Panc1 (cell line): ENCODE measurements at regions of chr7 and their contacts with region 1.

Region 1: DNA sequence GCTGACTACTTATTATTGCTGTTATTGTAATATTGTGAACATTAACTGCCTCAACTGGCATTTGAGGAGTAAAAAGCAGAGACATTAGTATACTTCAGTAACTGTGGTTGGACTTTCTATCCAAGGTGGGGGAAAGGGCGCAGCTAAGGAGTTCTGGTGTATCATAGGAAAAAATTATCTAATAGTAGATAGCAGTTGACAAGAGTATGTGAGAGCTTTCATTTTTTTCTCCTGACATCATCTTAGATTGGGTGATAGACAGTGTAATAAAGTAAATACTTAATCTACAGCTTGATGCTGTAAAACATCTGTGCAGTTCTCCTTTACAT is 68.9 kb downstream of the PHTF2 start:
- DNase-seq: no peak
- ATAC-seq: no peak; the same call in 1 of the 2 replicates
- H3K4me3 ChIP-seq: no peak overlapping the region
- H3K27ac ChIP-seq: no peak overlapping the region
- H3K4me1 ChIP-seq: peaks cover 14% of the 10 kb centered on the region; the same call in 1 of the 2 replicates
- H3K27me3 ChIP-seq: no peaks in the 10 kb centered on the region
- CTCF ChIP-seq: no peak

Region 2: GRCh38 chr7:77903597-77903996 is 36.1 kb after region 1 on chr7:
- CTCF ChIA-PET with region 1: no interaction called
- POLR2A ChIA-PET with region 1: interaction called, 18 read pairs
- in situ Hi-C with region 1: no loop called
- intact Hi-C with region 1: no loop called
- DNase-seq: no peak
- ATAC-seq: 0 out of 2 replicates have a peak, but pooled peaks have one; percentile 63
- H3K4me3 ChIP-seq: no peak overlapping the region
- H3K27ac ChIP-seq: no peak overlapping the region
- H3K4me1 ChIP-seq: no peaks in the 10 kb centered on the region
- H3K27me3 ChIP-seq: no peaks in the 10 kb centered on the region
- CTCF ChIP-seq: peak; percentile 48

Region 3: GRCh38 chr7:77913977-77914607 is 46.6 kb after region 1 on chr7:
- CTCF ChIA-PET with region 1: no interaction called
- POLR2A ChIA-PET with region 1: no interaction called
- in situ Hi-C with region 1: no loop called
- intact Hi-C with region 1: no loop called
- DNase-seq: no peak
- ATAC-seq: no peak
- H3K4me3 ChIP-seq: no peak overlapping the region
- H3K27ac ChIP-seq: no peak overlapping the region
- H3K4me1 ChIP-seq: no peaks in the 10 kb centered on the region
- H3K27me3 ChIP-seq: no peaks in the 10 kb centered on the region
- CTCF ChIP-seq: no peak

Region 4: GRCh38 chr7:77989981-77990566 is 122.6 kb after region 1 on chr7:
- CTCF ChIA-PET with region 1: no interaction called
- POLR2A ChIA-PET with region 1: no interaction called
- in situ Hi-C with region 1: no loop called
- intact Hi-C with region 1: no loop called
- DNase-seq: no peak
- ATAC-seq: no peak
- H3K4me3 ChIP-seq: no peak overlapping the region
- H3K27ac ChIP-seq: no peak overlapping the region
- H3K4me1 ChIP-seq: no peaks in the 10 kb centered on the region
- H3K27me3 ChIP-seq: no peaks in the 10 kb centered on the region; the same call in 1 of the 2 replicates
- CTCF ChIP-seq: peak; percentile 19; the same call in 1 of the 2 replicates

Region 5: GRCh38 chr7:78141522-78142281 is 274.2 kb after region 1 on chr7:
- CTCF ChIA-PET with region 1: no interaction called
- POLR2A ChIA-PET with region 1: no interaction called
- in situ Hi-C with region 1: no loop called
- intact Hi-C with region 1: no loop called
- DNase-seq: no peak
- ATAC-seq: no peak
- H3K4me3 ChIP-seq: no peak overlapping the region
- H3K27ac ChIP-seq: no peak overlapping the region
- H3K4me1 ChIP-seq: no peaks in the 10 kb centered on the region
- H3K27me3 ChIP-seq: peaks cover 4% of the 10 kb centered on the region; the same call in 1 of the 2 replicates
- CTCF ChIP-seq: no peak

Region 6: DNA sequence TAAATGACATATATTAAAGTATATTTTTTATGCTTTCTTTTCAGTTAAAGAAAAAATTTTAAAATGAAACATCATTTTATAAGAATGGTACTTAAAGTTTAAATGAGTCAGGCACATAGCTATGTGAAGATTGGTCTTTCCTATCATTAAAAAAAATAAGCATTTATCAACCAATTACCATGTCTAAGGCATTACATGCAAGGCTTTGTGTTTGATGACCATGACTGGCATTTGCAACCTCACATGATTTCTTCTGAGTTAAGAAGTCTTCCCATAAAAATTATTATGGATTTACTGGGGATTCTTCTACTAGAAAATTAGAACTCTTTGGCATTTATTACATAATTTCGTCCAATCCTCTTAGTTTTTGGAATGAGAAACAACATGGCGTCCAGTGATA is 809.9 kb after region 1 on chr7:
- CTCF ChIA-PET with region 1: no interaction called
- POLR2A ChIA-PET with region 1: no interaction called
- in situ Hi-C with region 1: no loop called
- intact Hi-C with region 1: no loop called
- DNase-seq: no peak
- ATAC-seq: no peak
- H3K4me3 ChIP-seq: no peak overlapping the region
- H3K27ac ChIP-seq: no peak overlapping the region
- H3K4me1 ChIP-seq: no peaks in the 10 kb centered on the region
- H3K27me3 ChIP-seq: no peaks in the 10 kb centered on the region
- CTCF ChIP-seq: no peak